Right ventricle myocardium superior (tissue), 1 donor: ENCODE measurements at regions of chr1 and their contacts with region 1.

Region 1: DNA sequence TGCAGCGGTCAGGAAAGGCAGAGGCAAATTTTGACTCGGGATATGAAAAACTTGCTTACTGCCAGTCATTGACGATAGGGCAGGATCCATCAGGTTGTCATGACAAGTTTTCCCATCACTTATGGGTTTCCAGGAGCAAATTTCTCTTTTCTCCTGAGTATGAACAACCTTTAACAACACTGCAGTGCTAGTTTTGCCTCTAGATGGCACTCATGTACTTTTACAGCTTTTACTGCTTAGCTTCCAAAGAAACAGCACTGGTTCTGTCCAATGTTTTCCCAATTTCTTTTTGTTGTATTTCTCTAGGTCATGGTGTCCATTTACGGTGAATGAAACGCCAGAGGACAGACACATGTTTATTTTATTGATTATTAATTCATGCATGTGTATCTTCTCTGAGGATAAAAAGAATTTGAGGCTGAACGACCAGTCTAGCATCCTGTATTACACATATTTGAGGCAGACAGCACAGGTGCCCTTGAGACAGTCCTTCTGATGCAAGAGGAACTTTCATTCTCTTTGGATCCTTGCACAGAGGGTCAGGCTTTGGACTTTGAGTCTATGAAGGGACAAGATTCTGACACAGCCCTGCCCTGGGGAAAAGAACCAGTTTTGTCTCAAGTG is 112.3 kb upstream of the TRABD2B start:
- DNase-seq: no peak
- ATAC-seq: peak; percentile 73

Region 2: DNA sequence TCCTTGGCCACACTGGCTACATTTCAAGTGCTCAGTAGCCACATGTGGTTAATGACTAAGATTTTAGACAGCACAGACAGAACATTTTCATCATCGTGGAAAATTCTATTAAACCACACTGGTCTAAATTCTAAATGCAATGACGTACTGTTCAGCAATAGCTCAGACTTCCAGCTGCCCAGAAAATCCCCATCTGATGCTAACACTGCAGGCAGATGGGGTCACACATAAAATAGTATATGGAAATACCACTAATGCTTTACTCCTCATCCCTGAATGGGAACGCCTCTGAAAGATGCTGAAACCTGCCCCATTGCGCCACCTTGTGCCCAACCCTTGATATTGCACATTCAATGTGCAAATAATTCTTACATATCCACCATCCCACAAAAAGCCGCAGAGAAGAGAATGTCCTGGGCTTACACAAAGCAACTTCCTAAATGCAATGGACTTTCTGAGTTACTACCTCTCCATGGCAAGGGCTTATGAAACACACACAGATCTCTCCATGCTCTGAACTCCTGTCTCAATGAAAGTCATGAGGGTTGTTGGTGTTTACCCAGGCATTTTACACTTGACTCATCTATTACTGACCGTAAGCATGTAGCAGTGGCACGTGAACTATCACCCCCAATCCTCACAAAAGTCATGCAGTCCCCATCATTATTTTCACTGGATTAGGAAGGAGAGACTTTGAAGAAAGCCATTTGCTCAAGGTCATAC is 92.7 kb after region 1 on chr1:
- intact Hi-C with region 1: loop called (anchors 5 kb)
- DNase-seq: peak; percentile 65
- ATAC-seq: peak; percentile 89

Region 3: DNA sequence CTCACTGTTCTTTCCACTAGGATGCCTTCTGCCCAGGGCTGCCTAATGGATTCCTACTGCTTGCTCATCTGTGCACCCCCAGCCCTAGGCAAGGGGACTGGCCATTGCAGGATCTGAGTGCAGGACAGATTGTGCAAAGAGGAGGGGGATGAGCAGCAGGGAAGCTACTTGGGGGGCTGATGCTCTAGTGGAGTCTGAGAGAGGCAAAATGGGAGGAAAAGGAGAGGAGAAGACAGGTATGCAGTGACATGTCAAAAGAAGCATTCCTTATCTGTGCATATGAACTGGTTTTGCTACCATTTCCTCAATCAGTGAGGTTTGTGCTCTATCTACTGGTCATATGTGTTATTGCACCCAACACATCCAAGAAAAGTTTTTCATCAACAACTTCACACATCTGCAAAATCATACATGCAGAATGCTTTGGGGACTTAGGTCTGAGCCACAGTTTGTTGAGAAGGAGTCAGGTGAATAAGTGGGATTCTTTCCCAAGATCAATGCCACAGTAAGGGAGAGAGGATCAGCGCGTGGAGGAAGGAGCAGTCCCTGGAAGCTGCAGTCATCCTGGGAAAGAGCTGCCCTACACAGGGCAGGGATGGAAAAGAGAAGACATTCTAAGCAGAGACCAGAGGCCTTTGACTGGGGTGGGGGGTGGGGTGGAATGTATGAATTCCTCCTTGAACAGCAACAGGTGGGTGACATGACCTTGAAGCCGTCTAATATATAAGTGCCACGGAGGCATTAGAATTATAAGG is 127.4 kb after region 1 on chr1:
- intact Hi-C with region 1: loop called (anchors 10 kb)
- DNase-seq: no peak
- ATAC-seq: no peak